Activated naive CD4-positive, alpha-beta T cell treated with anti-CD3 and anti-CD28 coated beads, Interleukin-2, amount 10 ng/mL, durations not matched to agents 7 days and 5 days (primary cell): ENCODE measurements at regions of chr1 and their contacts with region 1.

Region 1: DNA sequence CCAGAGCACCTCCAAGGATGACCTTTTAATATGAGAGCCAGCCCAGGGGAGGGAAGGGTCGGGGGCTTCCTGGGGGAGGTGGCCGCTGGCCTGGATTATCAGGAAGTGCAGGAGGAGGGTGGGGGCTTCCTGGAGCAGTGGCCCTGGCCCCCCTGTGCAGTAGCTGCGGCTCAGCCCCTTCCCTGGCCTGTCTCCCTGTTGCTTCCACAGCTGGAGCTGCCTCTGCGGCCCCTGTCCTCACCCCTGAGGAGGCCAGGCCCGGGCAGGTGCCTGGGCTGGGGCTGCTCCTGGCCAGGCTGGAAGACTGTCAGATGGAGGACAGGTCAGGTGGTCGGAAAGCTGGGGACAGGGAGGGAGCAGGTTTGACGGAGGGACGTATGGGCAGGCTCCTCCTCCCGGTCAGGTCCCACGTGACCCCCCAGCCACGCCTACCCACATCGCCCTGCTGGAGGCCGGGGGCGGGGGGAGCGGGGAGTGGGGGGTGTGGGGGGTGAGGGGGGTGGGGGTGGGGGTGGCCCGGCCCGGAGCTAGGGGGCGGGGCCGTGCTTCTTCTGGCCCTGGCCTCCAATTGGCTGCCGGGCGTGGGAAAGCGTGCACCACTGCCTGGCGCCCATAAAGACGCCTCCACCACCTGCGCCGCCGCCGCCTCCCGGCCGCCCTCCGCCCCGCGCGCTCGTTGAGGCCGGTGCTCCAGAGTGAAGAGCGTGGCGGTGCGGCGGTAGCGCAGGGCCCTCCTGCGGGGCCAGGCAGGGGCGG is 10.2 kb upstream of the TNFRSF14 start:
- DNase-seq: peak; percentile 93
- H3K4me3 Mint-ChIP-seq: peak overlapping the region; percentile 95
- H3K27ac Mint-ChIP-seq: peak overlapping the region; percentile 97
- H3K4me1 Mint-ChIP-seq: peaks cover 30% of the 10 kb centered on the region
- H3K27me3 Mint-ChIP-seq: peaks cover 41% of the 10 kb centered on the region

Region 2: DNA sequence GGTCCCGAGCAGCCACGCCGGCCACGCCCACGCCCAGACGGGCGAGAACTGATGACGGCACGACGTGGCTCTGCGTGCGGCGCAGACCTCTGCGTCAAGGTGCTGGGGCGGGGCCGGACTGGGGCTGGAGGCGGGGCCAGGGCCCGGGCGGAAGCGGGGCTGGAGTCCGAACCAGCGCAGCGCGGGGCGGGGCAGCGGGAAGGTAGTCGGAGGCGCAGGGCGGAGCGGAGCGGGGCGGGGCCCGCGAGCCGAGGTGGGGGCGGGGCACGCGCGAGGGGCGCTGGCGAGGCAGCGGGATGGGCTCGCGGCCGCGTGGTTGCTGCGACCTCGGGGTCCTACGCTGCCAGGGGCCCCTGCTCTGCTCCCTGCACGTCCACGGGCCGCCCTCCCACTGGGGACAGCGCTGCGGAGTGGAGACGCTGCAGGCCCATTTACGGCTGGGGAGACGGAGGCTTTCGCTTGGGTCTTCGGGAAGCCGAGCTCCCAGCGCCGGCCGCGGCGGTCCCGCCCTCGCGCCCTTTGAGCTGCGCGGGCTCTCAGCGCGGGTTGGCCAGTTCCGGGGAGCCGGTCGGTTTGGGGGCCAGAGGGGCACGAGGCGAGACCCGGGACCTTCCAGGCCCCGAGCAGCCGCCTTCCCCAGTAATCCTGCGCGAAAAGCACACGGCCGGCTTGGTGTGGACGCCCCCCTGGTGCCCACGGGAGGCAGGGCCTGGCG is 133.3 kb before region 1 on chr1 and contains the start of gene PEX10:
- CTCF ChIA-PET with region 1: interaction called, 16 read pairs
- DNase-seq: peak; percentile 99
- H3K4me3 Mint-ChIP-seq: peak within 1 kb of the TSS; percentile 84
- H3K27ac Mint-ChIP-seq: peak within 1 kb of the TSS; percentile 90
- H3K4me1 Mint-ChIP-seq: peaks cover 46% of the 10 kb centered on the region
- H3K27me3 Mint-ChIP-seq: no peaks in the 10 kb centered on the region

Region 3: DNA sequence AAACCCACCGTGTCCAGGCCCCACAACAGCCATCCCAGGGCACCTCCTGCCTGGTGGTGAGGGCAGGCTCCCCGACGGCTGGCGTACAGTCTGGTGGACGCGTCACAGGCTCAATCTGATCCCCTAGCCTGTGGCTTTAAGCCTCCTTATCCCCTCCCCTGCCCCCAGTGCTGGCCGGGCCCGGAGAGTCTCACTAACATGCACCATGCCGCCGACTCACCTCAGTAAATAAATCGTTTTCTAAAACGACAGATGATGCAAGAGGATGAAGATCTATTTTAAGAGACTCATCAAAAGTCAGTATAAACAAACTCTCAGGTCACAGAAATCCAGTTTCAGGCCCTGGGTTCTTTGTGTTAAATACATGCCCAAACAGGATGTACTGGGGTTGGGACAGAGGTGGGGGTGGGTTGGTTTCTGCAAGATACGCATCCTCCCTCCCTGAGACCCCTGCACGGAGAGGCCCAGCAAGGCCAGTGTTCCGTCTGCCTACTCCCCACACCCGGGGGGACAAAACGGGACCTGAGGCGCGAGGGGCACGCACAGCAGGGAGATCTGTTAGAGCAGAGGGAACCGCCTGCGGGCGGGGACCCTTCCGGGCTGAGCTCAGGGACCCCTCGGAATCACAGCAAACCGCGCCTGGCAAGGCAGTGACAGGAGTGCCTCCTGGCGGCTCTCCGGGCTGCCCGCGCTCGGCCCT is 22.6 kb before region 1 on chr1:
- CTCF ChIA-PET with region 1: interaction called, 15 read pairs
- DNase-seq: peak; percentile 55
- H3K4me3 Mint-ChIP-seq: peak overlapping the region; percentile 89
- H3K27ac Mint-ChIP-seq: peak overlapping the region; percentile 99
- H3K4me1 Mint-ChIP-seq: peaks cover 41% of the 10 kb centered on the region
- H3K27me3 Mint-ChIP-seq: peaks cover 17% of the 10 kb centered on the region

Region 4: DNA sequence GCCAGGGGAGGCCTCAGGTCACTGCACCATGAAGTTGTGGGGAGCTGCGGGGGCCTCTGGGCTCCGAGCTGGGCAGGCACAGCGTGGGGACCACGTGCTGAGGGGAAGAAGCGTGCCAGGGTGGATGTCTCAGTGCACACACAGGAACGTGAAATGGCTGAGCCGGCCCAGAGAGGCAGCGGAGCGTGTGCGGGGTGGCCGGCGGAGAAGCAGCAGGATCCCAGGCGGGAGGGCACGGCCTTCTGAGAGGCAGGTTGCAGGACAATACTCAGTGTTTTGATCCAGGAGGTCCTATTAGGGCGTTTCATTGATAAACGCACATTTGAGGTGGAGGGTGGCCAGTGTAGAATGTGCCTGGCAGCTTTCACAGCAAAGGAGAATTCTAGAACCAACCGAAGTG is 23.1 kb after region 1 on chr1:
- CTCF ChIA-PET with region 1: no interaction called
- DNase-seq: no peak
- H3K4me3 Mint-ChIP-seq: no peak overlapping the region
- H3K27ac Mint-ChIP-seq: no peak overlapping the region
- H3K4me1 Mint-ChIP-seq: peaks cover 5% of the 10 kb centered on the region
- H3K27me3 Mint-ChIP-seq: peaks cover 17% of the 10 kb centered on the region

Region 5: DNA sequence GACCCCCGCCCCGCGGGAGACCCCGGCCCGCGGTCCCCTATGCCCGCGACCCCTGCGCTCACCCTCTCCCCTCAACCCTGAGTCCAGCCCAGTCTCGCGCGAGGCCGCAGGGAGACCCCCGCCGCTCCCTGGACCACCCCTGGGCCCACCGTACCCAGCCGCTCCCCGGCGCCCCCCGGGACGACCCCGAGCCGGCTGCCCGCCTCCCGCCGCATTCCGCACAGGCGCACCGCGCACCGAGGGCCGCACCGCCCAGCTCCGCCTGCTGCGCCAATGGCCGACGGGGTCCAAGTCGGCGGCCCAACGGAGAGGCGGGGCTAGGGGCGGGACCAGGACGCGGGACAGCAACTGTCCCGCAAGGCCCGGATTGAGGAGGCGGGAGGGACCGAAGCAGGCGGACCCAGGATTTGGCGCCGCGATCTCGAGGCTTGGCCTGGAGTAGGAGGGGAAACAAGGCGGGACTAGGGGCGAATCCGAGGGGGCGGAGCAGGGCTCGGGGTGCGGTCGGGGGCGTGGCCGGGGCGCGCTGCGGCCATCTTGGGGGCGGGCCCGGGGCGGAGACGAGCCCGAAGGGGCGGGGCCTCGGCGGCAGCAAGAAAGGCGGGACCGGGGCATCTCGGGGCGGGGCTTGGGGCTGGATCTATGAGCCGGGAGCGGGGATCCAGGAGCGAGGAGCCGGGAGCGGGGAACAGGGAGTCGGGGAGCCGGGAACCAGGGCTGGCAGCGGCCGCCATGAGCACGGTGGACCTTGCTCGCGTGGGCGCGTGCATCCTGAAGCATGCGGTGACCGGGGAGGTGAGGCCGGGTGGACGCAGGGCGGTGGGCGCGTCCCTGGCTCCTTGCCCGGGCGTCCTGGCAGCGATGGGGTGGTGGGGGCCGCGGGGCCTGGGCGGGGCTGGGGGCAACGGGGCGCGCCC is 40.5 kb after region 1 on chr1 and contains the start of gene PRXL2B:
- CTCF ChIA-PET with region 1: interaction called, 14 read pairs
- DNase-seq: peak; percentile 100
- H3K4me3 Mint-ChIP-seq: peak within 1 kb of the TSS; percentile 81
- H3K27ac Mint-ChIP-seq: peak within 1 kb of the TSS; percentile 95
- H3K4me1 Mint-ChIP-seq: peaks cover 36% of the 10 kb centered on the region
- H3K27me3 Mint-ChIP-seq: no peaks in the 10 kb centered on the region